ENCODE measurements at regions of chr5 and their contacts with region 1.

Region 1: DNA sequence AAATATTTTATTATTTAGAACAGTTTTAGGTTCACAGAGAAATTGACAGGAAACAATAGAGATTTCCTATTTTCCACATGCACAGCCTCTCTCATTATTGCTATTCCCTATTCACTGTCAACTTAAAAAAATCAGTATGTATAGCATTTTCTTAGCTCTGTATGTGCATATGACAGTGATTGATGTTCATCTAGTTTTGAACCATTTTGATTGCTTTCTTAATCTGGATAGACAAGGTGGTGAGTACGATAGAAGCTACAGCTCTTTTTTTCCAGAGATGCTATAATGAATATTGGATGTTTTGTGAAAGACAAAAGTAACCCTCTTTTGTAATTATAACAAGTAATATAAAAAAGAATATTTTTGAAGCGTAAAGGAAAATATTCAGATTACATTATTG is 201.2 kb upstream of the ARRDC3 start:
- DNase-seq: no peak
- ATAC-seq: no peak
- H3K4me3 ChIP-seq: no peak overlapping the region
- H3K27ac ChIP-seq: no peak overlapping the region
- H3K4me1 ChIP-seq: no peaks in the 10 kb centered on the region; the same call in 1 of the 2 replicates
- H3K27me3 ChIP-seq: no peaks in the 10 kb centered on the region
- CTCF ChIP-seq: no peak
- EP300 ChIP-seq: no peak
- POLR2A ChIP-seq: no peak
- RAD21 ChIP-seq: no peak

Region 2: GRCh38 chr5:91651703-91652102 is 67.4 kb after region 1 on chr5:
- CTCF ChIA-PET with region 1: no interaction called
- POLR2A ChIA-PET with region 1: no interaction called
- in situ Hi-C with region 1: no loop called
- intact Hi-C with region 1: no loop called
- DNase-seq: no peak
- ATAC-seq: no peak
- H3K4me3 ChIP-seq: no peak overlapping the region
- H3K27ac ChIP-seq: no peak overlapping the region
- H3K4me1 ChIP-seq: no peaks in the 10 kb centered on the region
- H3K27me3 ChIP-seq: no peaks in the 10 kb centered on the region
- CTCF ChIP-seq: no peak
- EP300 ChIP-seq: no peak
- POLR2A ChIP-seq: no peak
- RAD21 ChIP-seq: no peak

Region 3: GRCh38 chr5:92460505-92460904 is 876.2 kb after region 1 on chr5:
- CTCF ChIA-PET with region 1: no interaction called
- POLR2A ChIA-PET with region 1: no interaction called
- in situ Hi-C with region 1: no loop called
- intact Hi-C with region 1: loop called (anchors 5 kb)
- DNase-seq: no peak
- ATAC-seq: no peak
- H3K4me3 ChIP-seq: no peak overlapping the region
- H3K27ac ChIP-seq: no peak overlapping the region
- H3K4me1 ChIP-seq: no peaks in the 10 kb centered on the region
- H3K27me3 ChIP-seq: no peaks in the 10 kb centered on the region
- CTCF ChIP-seq: no peak
- EP300 ChIP-seq: no peak
- POLR2A ChIP-seq: no peak
- RAD21 ChIP-seq: no peak

Measured in HepG2 (cell line).